ENCODE measurements at regions of chr5 and their contacts with region 1.

Region 1: GRCh38 chr5:32942225-32942989 is 231.3 kb downstream of the NPR3 start:
- DNase-seq: no peak
- ATAC-seq: peak; percentile 86
- H3K4me3 ChIP-seq: no peak overlapping the region
- H3K27ac ChIP-seq: no peak overlapping the region
- H3K4me1 ChIP-seq: no peaks in the 10 kb centered on the region
- H3K27me3 ChIP-seq: no peaks in the 10 kb centered on the region
- CTCF ChIP-seq: peak; percentile 35 to 61 (median 49)
- EP300 ChIP-seq: no peak
- POLR2A ChIP-seq: no peak
- RAD21 ChIP-seq: peak; percentile 41

Region 2: DNA sequence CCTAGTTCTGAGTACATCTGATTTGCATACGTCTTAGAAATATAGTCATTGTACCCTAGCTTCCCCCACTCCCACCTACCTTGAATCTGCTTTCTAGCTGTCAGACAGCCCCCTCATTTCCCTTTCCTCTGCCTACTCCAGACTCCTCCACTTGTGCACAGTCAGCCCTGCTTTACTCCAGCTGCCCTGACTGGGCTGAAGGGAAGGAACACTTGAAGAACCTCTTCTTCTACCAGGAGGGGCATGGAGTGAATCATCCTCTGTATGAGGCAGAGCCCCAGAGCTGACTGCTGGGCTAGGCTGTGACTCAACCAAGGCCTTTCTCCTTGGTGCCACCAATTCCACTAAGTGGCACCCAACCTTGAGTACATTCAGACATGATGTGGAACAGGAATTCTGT is 479.8 kb before region 1 on chr5:
- CTCF ChIA-PET with region 1: no interaction called
- POLR2A ChIA-PET with region 1: no interaction called
- RAD21 ChIA-PET with region 1: no interaction called
- SMC1A ChIA-PET with region 1: no interaction called
- in situ Hi-C with region 1: loop called (anchors 25 kb)
- intact Hi-C with region 1: no loop called
- DNase-seq: no peak
- ATAC-seq: no peak
- H3K4me3 ChIP-seq: no peak overlapping the region
- H3K27ac ChIP-seq: no peak overlapping the region
- H3K4me1 ChIP-seq: no peaks in the 10 kb centered on the region
- H3K27me3 ChIP-seq: no peaks in the 10 kb centered on the region
- CTCF ChIP-seq: no peak
- EP300 ChIP-seq: no peak
- POLR2A ChIP-seq: no peak
- RAD21 ChIP-seq: no peak

Measured in GM12878 (cell line).